Mammary epithelial cell (primary cell): ENCODE measurements at regions of chr12 and their contacts with region 1.

Region 1: DNA sequence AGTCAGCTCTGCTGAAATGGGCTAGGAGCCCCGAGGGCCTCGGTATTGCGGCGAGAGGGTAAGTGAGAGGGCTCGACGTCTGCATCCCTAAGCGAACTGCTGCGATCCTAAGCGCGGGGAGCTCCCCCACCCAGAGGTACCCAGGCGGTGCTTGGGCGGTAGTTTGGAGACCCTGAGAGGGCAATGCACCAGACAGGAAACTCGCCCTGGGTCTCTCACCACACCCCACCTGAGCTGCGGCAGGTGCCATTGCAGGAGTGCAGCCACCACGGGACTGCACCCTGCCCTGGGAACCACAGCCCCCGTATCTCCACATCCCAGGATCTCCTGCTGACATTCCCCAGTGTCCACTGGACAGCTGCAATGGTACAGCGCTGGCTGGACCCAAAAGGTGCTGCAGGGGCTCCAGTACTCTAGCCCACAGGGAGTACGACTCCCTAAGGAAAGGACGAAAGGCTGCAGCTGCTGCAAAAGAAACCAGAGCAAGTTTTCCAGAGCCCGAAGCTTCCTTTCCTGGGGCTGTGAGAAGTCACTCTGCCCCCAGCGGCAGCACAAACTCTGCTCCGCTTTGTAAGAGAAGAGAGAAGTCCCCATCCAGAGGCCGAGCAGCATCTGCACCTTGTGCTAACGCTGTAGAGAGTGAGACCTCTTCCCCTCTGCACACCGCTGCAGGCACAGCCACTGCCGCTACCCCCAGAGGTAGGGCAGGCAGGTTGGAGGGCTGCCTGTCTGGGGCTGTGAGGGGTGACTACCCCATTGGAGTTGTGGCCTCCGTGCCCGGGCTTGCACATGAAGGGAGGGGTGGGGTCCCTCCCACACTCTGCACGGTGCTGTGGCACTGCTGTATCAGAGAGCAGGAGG is 31.1 kb upstream of the MON2 start:
- DNase-seq: peak; percentile 40
- H3K4me3 ChIP-seq: peak overlapping the region; percentile 46 to 52 (median 46)
- H3K27ac ChIP-seq: no peak overlapping the region
- H3K4me1 ChIP-seq: peaks cover 12% of the 10 kb centered on the region
- H3K27me3 ChIP-seq: no peaks in the 10 kb centered on the region
- CTCF ChIP-seq: peak; percentile 43 to 51

Region 2: GRCh38 chr12:62581288-62582064 is 145.9 kb after region 1 on chr12:
- CTCF ChIA-PET with region 1: no interaction called
- dilution Hi-C with region 1: no loop called
- in situ Hi-C with region 1: no loop called
- intact Hi-C with region 1: loop called (anchors 1 kb)
- DNase-seq: peak; percentile 25
- H3K4me3 ChIP-seq: no peak overlapping the region
- H3K27ac ChIP-seq: no peak overlapping the region
- H3K4me1 ChIP-seq: no peaks in the 10 kb centered on the region
- H3K27me3 ChIP-seq: no peaks in the 10 kb centered on the region
- CTCF ChIP-seq: peak; percentile 46 to 65

Region 3: GRCh38 chr12:62793256-62794217 is 358.0 kb after region 1 on chr12:
- CTCF ChIA-PET with region 1: interaction called, 3 read pairs
- dilution Hi-C with region 1: no loop called
- in situ Hi-C with region 1: no loop called
- intact Hi-C with region 1: loop called (anchors 1 kb)
- DNase-seq: peak; percentile 67
- H3K4me3 ChIP-seq: no peak overlapping the region
- H3K27ac ChIP-seq: no peak overlapping the region
- H3K4me1 ChIP-seq: peaks cover 5% of the 10 kb centered on the region
- H3K27me3 ChIP-seq: no peaks in the 10 kb centered on the region
- CTCF ChIP-seq: peak; percentile 95 to 96

Region 4: DNA sequence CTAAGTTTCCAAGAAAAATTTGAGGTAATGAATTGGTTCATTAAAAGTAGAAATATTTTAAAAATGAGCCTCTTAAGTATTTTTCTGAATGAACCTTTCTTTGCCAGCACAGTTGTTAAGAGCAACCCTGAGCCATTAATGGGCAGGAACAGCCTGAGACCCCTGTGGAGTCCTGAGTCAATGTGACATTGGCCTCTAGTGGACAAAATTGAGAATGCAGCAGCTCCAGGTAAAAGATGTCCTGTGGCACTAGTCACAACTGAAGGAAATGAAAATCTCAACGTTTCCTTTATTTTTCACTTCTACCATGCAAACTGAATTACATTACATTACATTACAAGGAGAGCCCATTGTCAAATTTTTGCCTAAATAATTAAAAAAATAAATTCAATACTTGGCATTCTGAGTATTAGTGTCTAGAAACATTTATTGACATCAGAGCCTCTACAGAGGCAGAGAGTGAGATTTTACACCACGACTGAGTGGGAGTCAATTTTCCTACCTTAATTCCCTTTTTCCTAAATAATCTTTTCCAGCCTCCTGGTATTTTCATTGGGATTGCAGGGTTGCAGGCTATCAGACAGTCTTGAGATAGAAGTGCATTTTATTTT is 363.7 kb after region 1 on chr12:
- CTCF ChIA-PET with region 1: interaction called, 3 read pairs
- dilution Hi-C with region 1: no loop called
- in situ Hi-C with region 1: loop called (anchors 5 to 10 kb)
- intact Hi-C with region 1: loop called (anchors 1 kb)
- DNase-seq: peak; percentile 36
- H3K4me3 ChIP-seq: no peak overlapping the region
- H3K27ac ChIP-seq: no peak overlapping the region
- H3K4me1 ChIP-seq: peaks cover 7% of the 10 kb centered on the region
- H3K27me3 ChIP-seq: no peaks in the 10 kb centered on the region
- CTCF ChIP-seq: peak; percentile 95 to 97

Region 5: DNA sequence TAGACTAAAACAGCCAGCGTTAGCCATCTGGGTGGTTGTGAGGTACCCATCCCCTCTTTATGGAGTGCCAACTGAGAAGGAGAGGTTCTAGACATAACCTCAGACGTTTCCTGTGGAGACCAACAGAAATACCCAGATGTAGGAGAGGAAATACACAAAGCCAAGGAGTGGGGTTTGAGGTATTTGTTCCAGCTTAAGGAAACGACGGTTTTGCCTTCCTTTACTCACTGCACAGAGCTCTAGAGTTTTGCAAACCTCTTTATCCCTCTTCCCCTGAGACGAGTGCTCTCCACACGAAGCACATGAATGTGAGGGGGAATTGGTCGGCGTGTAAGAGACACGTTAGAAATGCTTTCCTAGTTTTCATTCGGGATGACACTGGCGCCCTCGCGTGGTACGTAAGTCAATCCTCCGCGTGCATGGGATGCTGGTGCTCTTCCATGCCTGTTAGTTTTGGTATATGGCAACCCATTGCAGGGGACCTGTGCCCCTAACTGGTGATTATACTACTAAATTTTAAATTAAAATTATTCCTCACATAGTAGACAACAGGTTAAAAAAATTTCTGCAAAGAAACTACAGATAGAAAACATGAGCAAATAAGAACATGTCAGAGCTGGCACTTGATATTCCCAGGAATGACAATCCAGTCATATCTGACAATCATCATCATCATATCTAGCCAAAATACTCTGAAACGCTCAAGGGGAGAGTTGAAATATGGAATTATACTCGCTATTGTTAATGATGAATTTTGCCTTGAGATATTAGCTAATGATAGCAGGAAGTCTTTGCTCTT is 377.7 kb after region 1 on chr12:
- CTCF ChIA-PET with region 1: no interaction called
- dilution Hi-C with region 1: no loop called
- in situ Hi-C with region 1: loop called in 1 of 2 experiments (anchors 10 kb)
- intact Hi-C with region 1: loop called (anchors 1 kb)
- DNase-seq: peak; percentile 40
- H3K4me3 ChIP-seq: no peak overlapping the region
- H3K27ac ChIP-seq: no peak overlapping the region
- H3K4me1 ChIP-seq: peaks cover 8% of the 10 kb centered on the region
- H3K27me3 ChIP-seq: no peaks in the 10 kb centered on the region
- CTCF ChIP-seq: peak; percentile 85 to 90

Region 6: DNA sequence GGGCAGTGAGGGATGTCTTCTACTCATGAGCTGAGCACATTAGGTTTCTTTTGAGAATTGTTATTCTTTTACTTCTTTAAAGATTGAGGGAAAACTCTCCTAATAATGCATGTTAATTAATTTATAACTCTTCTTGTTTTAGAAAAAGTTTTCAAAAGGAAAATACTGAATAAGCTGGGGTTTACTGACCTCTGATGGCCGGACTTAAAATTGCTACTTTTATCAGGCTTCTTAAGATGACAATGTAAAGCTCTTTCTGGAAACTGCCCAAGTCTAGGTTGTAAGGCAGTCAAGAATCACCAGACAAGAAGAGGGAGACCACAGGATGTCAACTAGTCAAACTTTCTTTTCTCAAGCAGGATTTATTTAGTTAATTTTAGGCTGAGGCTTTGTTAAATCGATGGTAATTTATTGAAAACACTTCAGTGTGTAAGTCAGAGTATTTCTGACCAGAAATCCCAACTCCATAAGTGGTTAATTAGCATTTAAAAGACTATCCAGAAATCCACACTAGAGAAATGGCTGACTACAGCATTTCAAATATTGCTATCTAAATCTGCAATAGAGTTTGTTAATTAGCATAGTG is 633.4 kb after region 1 on chr12:
- CTCF ChIA-PET with region 1: no interaction called
- dilution Hi-C with region 1: no loop called
- in situ Hi-C with region 1: loop called (anchors 25 kb)
- intact Hi-C with region 1: loop called (anchors 1 kb)
- DNase-seq: peak; percentile 37
- H3K4me3 ChIP-seq: no peak overlapping the region
- H3K27ac ChIP-seq: no peak overlapping the region
- H3K4me1 ChIP-seq: no peaks in the 10 kb centered on the region
- H3K27me3 ChIP-seq: no peaks in the 10 kb centered on the region
- CTCF ChIP-seq: peak; percentile 56 to 62